ENCODE measurements at regions of chr6 and their contacts with region 1.

Region 1: DNA sequence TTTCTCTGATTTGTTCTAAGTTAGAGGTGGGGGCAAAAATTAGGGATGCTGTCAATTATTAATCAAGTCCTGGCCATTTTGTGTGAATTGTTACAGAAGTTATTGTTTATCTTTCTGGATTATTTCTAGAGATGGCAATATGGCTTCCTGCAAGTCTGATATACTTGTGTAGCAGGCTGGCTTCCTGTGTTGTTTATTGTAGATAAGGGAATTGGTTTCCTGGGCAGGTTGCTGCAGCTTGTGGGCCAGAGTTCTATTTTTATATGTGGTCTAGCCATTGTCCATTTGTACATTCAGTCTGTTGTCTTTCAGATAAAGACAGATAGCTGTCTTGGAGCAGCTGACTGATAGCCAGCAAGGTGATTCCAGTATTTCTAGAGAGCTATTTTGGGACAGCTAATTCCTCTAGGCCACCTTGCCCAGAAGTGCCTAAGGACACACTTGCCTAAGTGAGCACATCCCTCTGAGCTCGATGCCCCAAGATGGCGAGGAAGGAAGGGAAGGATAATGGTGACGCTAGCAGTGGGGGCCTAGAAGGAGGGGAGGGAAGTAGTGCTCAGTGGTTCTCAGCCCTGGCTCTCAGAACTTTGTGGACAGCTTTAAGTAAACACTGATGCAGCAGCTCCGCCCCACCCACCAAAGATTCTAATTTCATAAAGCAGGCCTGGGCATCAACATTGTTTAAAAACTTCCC is 25.5 kb downstream of the DDO start:
- DNase-seq: peak; percentile 16
- ATAC-seq: peak; percentile 40
- H3K4me3 Mint-ChIP-seq: no peak overlapping the region
- H3K27ac Mint-ChIP-seq: peak overlapping the region; percentile 79
- H3K4me1 Mint-ChIP-seq: peaks cover 25% of the 10 kb centered on the region
- H3K27me3 Mint-ChIP-seq: no peaks in the 10 kb centered on the region
- CTCF ChIP-seq: no peak

Region 2: DNA sequence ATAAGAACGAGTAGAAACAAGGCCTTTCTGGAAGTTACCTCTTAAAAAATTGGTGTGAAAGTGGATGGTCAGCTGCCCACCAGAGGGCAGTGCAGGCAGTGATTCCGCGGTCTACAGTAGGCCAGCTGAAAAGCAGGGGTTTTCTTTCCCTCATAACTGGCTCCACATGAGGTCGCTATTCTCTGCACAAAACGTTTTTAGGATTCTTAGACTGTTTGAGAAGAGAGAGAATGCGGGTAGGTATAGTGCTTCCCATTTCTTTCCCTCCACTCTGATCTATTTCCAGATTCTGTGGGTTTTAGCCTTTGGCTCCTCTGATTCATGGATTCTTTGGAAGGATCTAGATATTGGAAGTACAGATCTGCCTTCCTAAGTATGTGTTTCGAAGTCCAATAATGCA is 684.6 kb before region 1 on chr6:
- CTCF ChIA-PET with region 1: interaction called, 26 read pairs
- POLR2A ChIA-PET with region 1: no interaction called
- intact Hi-C with region 1: loop called (anchors 1 kb)
- DNase-seq: peak; percentile 90
- ATAC-seq: peak; percentile 98
- H3K4me3 Mint-ChIP-seq: no peak overlapping the region
- H3K27ac Mint-ChIP-seq: no peak overlapping the region
- H3K4me1 Mint-ChIP-seq: peaks cover 15% of the 10 kb centered on the region
- H3K27me3 Mint-ChIP-seq: no peaks in the 10 kb centered on the region
- CTCF ChIP-seq: peak; percentile 99

Region 3: GRCh38 chr6:110053395-110054240 is 336.2 kb before region 1 on chr6:
- CTCF ChIA-PET with region 1: interaction called, 3 read pairs
- POLR2A ChIA-PET with region 1: no interaction called
- intact Hi-C with region 1: loop called (anchors 5 kb)
- DNase-seq: no peak
- ATAC-seq: no peak
- H3K4me3 Mint-ChIP-seq: no peak overlapping the region
- H3K27ac Mint-ChIP-seq: no peak overlapping the region
- H3K4me1 Mint-ChIP-seq: no peaks in the 10 kb centered on the region
- H3K27me3 Mint-ChIP-seq: peaks cover 3% of the 10 kb centered on the region
- CTCF ChIP-seq: peak; percentile 74

Region 4: GRCh38 chr6:110181131-110182030 is 208.5 kb before region 1 on chr6:
- CTCF ChIA-PET with region 1: interaction called, 8 read pairs
- POLR2A ChIA-PET with region 1: interaction called, 4 read pairs
- intact Hi-C with region 1: loop called (anchors 2 kb)
- DNase-seq: peak; percentile 25
- ATAC-seq: no peak
- H3K4me3 Mint-ChIP-seq: no peak overlapping the region
- H3K27ac Mint-ChIP-seq: no peak overlapping the region
- H3K4me1 Mint-ChIP-seq: peaks cover 18% of the 10 kb centered on the region
- H3K27me3 Mint-ChIP-seq: peaks cover 4% of the 10 kb centered on the region
- CTCF ChIP-seq: no peak

Region 5: GRCh38 chr6:110296241-110297025 is 93.4 kb before region 1 on chr6:
- CTCF ChIA-PET with region 1: interaction called, 18 read pairs
- POLR2A ChIA-PET with region 1: no interaction called
- intact Hi-C with region 1: no loop called
- DNase-seq: peak; percentile 26
- ATAC-seq: peak; percentile 22
- H3K4me3 Mint-ChIP-seq: peak overlapping the region; percentile 67
- H3K27ac Mint-ChIP-seq: peak overlapping the region; percentile 59
- H3K4me1 Mint-ChIP-seq: peaks cover 25% of the 10 kb centered on the region
- H3K27me3 Mint-ChIP-seq: no peaks in the 10 kb centered on the region
- CTCF ChIP-seq: no peak

Region 6: GRCh38 chr6:110366256-110366655 is 23.6 kb before region 1 on chr6:
- CTCF ChIA-PET with region 1: interaction called, 19 read pairs
- POLR2A ChIA-PET with region 1: no interaction called
- intact Hi-C with region 1: no loop called
- DNase-seq: peak; percentile 5
- ATAC-seq: no peak
- H3K4me3 Mint-ChIP-seq: no peak overlapping the region
- H3K27ac Mint-ChIP-seq: peak overlapping the region; percentile 49
- H3K4me1 Mint-ChIP-seq: peaks cover 40% of the 10 kb centered on the region
- H3K27me3 Mint-ChIP-seq: no peaks in the 10 kb centered on the region
- CTCF ChIP-seq: no peak

Region 7: GRCh38 chr6:110448846-110449540 is 59.2 kb after region 1 on chr6:
- CTCF ChIA-PET with region 1: no interaction called
- POLR2A ChIA-PET with region 1: no interaction called
- intact Hi-C with region 1: no loop called
- DNase-seq: no peak
- ATAC-seq: no peak
- H3K4me3 Mint-ChIP-seq: no peak overlapping the region
- H3K27ac Mint-ChIP-seq: no peak overlapping the region
- H3K4me1 Mint-ChIP-seq: no peaks in the 10 kb centered on the region
- H3K27me3 Mint-ChIP-seq: peaks cover 2% of the 10 kb centered on the region
- CTCF ChIP-seq: no peak

Region 8: DNA sequence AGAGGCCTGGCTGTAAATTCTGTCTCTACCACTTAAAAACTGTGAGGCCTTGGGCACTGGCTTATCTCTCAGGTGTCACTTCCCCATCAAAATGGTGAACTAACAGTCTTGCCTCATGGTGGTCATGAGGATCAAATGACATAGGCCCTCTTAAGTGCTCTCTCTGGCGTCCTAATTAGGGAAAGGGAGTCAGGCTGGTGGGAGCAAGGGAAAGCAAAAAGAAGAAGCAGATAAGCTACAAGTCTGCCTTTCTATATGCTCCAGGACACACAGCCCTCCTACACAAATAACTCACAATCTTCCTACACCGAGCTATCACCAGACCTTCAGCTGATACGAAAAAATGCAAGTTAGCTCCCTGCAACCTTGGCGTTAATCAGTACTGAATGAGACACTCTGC is 106.1 kb after region 1 on chr6:
- CTCF ChIA-PET with region 1: no interaction called
- POLR2A ChIA-PET with region 1: no interaction called
- intact Hi-C with region 1: no loop called
- DNase-seq: no peak
- ATAC-seq: no peak
- H3K4me3 Mint-ChIP-seq: no peak overlapping the region
- H3K27ac Mint-ChIP-seq: no peak overlapping the region
- H3K4me1 Mint-ChIP-seq: peaks cover 15% of the 10 kb centered on the region
- H3K27me3 Mint-ChIP-seq: peaks cover 7% of the 10 kb centered on the region
- CTCF ChIP-seq: no peak